ENCODE measurements at regions of chr17 and their contacts with region 1.

Region 1: GRCh38 chr17:5405400-5405799 is 14.1 kb downstream of the NUP88 start:
- DNase-seq: no peak
- H3K4me3 Mint-ChIP-seq: no peak overlapping the region
- H3K27ac Mint-ChIP-seq: no peak overlapping the region
- H3K4me1 Mint-ChIP-seq: peaks cover 13% of the 10 kb centered on the region
- H3K27me3 Mint-ChIP-seq: no peaks in the 10 kb centered on the region

Region 2: DNA sequence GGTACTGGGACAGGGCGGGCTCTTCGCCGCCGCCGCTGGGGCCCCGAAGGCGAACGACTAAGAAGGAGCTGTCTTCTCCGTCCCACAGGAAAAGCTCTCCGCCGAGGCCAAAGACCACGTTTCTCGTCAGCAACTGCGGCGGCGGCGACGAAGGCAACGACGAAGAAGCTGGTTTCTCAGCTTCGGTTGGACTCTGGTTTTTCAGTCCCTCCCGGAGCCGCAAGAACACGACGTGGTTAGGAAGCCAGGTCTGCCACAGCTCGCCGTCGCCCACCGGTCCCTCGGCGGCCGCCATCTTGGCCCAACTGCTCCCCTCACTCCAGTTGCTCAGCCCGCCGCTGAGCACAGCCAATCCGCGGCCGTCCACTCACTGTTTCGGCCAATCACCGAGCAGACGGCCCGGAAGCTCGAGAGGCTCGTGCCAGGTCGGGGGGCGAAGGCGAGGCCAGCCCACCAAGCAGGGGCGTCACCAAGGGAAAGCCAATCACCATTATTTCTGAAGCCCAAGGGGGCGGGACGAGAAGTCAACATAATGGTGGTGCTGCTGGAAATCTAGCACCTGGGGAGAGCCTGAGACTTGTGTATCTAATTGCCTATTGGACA is 14.1 kb after region 1 on chr17 and contains the start of gene NUP88:
- CTCF ChIA-PET with region 1: no interaction called
- POLR2A ChIA-PET with region 1: interaction called, 10 read pairs
- DNase-seq: peak; percentile 97
- H3K4me3 Mint-ChIP-seq: peak within 1 kb of the TSS; percentile 99
- H3K27ac Mint-ChIP-seq: peak within 1 kb of the TSS; percentile 99
- H3K4me1 Mint-ChIP-seq: peaks cover 45% of the 10 kb centered on the region
- H3K27me3 Mint-ChIP-seq: no peaks in the 10 kb centered on the region
- total RNA-seq, gene NUP88: 80.6 to 85.9 TPM

Measured in activated CD4-positive, alpha-beta memory T cell treated with anti-CD3 and anti-CD28 coated beads, Interleukin-2, amount 10 ng/mL, durations not matched to agents 7 days and 5 days (primary cell).